Dendritic cell treated with granulocyte-macrophage colony-stimulating factor and Interleukin-4, amounts not matched to agents 40 ng/mL and 50 ng/mL, for 4 days (primary cell): ENCODE measurements at regions of chr12 and their contacts with region 1.

Region 1: DNA sequence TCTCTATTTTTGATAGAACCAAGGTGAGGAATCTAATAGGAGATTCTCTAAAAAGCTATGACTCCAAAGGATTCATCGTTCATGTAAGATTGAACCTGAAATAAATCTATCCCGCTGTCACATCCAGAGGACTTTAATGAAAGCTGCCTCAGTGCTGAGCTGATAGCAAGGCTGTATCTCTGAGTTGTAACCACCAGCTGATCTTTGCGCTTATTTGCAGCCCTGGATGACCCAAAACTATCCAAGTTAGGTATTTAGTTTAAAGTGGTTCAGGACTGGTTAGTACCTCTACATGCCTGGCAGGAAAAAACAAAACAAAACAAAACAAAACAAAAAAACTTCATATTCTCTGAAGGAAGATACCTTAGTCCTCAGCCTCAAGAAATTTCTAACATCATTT is 8.8 kb upstream of the ANKRD33 start:
- H3K4me3 Mint-ChIP-seq: no peak overlapping the region
- H3K27ac Mint-ChIP-seq: no peak overlapping the region
- H3K4me1 Mint-ChIP-seq: peaks cover 17% of the 10 kb centered on the region
- H3K27me3 Mint-ChIP-seq: peaks cover under 1% of the 10 kb centered on the region

Region 2: DNA sequence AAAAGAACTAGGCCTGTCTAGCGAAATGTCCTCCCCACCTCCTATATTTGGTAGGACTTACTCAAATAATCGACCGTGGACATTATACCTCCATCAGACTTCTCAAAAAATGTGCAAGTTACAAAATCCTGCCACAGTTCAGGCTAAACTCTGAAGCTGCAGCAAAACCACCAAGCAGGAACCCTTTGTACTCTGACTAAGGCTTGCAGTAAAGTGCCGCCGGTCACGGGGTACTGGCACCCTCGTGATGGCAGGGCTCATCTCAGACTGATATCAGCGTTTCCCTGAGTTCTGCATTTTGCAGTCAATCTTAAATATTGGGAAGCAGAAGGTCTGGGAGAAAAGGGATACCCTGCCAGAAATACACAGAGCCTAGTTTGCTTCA is 870.1 kb before region 1 on chr12:
- intact Hi-C with region 1: no loop called
- H3K4me3 Mint-ChIP-seq: peak overlapping the region; percentile 87
- H3K27ac Mint-ChIP-seq: peak overlapping the region; percentile 96
- H3K4me1 Mint-ChIP-seq: peaks cover 82% of the 10 kb centered on the region
- H3K27me3 Mint-ChIP-seq: no peaks in the 10 kb centered on the region

Region 3: DNA sequence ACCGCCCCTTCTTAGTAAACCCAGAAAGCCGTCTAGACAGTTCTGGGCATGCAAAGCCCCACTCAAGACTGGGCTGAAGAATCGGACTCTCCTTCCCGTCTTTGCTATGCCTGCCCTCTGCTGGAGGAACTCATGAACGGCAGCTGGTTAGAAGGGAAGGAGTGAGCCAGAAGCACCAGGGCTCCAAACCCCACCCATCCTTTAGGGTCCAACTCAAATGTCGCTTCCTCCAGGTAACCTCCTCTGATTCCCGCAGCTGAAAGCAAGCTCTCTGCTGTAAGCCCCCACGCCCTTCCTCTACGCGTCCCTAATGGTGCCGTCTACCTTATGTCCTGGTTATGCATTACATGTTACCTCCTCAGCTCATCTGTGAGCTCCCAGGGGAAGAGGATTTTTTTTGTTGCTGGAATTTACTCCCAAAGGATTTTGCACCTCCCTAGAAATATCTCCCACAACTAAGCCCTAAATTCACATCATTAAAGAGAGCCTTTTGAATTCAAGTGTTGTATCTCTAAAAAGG is 347.1 kb before region 1 on chr12:
- intact Hi-C with region 1: loop called (anchors 5 kb)
- H3K4me3 Mint-ChIP-seq: no peak overlapping the region
- H3K27ac Mint-ChIP-seq: no peak overlapping the region
- H3K4me1 Mint-ChIP-seq: peaks cover 39% of the 10 kb centered on the region
- H3K27me3 Mint-ChIP-seq: peaks cover 36% of the 10 kb centered on the region

Region 4: GRCh38 chr12:51923501-51924271 is 44.6 kb after region 1 on chr12:
- intact Hi-C with region 1: no loop called
- H3K4me3 Mint-ChIP-seq: peak overlapping the region; percentile 14
- H3K27ac Mint-ChIP-seq: peak overlapping the region; percentile 71
- H3K4me1 Mint-ChIP-seq: peaks cover 48% of the 10 kb centered on the region
- H3K27me3 Mint-ChIP-seq: peaks cover 22% of the 10 kb centered on the region